Prostate gland (tissue), 2 donors: ENCODE measurements at regions of chrX and their contacts with region 1.

Region 1: DNA sequence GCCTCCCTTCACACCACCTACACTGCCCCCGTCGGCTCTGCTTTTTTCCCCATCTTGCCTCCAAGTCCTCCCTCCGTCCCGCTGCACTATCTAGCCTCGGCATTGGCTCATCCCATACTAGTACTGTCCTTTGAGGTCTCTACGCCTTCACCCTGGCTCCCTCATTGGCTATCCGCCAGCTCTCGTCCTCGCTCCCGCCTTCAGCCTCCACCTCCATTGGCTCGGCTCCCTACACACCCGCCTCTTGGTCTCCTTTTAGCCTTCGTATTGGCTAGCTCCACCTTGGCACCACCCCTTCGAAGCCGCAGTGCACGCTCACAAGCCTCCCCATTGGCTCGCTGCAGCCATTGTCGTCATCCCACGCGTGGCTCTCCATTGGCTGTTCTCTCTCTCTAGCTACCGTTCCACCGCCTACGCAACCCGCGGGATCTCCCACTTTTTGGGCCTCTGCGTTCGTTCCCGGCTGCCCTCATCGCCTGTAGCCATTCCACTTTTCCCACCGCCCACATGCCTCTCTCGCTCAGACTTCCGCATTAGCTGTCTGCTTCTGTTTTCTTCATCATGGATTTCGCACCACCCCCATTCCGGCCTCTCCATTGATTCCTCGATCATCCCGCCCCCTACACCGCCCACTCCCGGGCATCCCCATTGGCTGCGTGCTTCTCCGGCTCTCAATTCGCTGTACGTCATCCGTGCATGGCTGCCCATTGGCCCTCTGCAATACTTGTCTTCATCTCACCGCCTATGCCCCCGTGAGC is 404 bp upstream of the PPP1R3F start:
- DNase-seq: peak; percentile 95
- H3K4me3 ChIP-seq: peak overlapping the region; percentile 54 to 57
- H3K27ac ChIP-seq: peak overlapping the region; percentile 89 to 92
- H3K4me1 ChIP-seq: no peaks in the 10 kb centered on the region
- H3K27me3 ChIP-seq: no peaks in the 10 kb centered on the region
- CTCF ChIP-seq: peak in 1 of 4 experiments; percentile 7
- POLR2A ChIP-seq: peak; percentile 45

Region 2: DNA sequence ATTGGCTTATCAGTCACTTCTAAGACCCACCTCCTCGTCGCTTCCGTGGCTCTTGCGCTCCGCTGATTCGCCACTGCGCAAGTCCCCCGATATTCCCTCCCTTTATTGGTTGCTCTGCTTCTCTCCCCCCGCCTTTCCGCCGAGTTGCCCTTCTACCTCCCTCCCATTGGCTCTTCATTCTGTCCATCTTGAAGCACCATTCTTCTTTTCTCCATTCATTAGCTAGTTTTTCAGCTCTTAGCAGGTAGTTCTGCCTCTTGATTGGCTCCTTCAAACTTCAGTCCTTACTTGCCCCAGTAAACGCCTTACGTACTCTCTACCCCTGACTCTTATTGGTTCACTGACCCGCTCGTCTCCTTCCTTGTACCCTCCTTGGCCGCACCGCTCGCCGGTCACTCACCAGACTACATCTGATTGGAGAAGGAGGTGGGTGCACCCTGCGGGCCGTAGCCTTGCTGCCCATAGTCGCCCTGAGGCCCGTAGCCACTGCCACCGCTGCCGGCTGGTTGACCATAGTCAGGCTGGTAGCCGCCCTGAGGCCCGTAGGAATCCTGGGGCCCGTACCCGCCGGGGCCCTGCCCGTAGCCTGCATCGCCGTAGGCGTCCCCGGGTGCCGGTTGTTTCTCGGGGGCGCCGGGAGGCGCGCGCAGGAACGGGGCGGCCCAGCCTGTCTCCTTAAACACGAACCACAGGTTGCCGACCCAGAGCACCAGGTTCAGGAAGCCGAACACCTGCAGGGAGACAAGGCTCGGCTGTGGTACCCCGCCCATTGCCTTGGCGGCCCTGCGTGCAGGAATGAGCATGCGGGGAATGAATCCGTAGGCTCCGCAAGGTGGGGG is 77.9 kb before region 1 on chrX:
- intact Hi-C with region 1: loop called (anchors 10 kb)
- DNase-seq: peak; percentile 94
- H3K4me3 ChIP-seq: peak overlapping the region; percentile 54 to 56
- H3K27ac ChIP-seq: peak overlapping the region; percentile 77 to 88
- H3K4me1 ChIP-seq: no peaks in the 10 kb centered on the region
- H3K27me3 ChIP-seq: no peaks in the 10 kb centered on the region
- CTCF ChIP-seq: peak in 1 of 4 experiments; percentile 25
- POLR2A ChIP-seq: peak; percentile 80

Region 3: DNA sequence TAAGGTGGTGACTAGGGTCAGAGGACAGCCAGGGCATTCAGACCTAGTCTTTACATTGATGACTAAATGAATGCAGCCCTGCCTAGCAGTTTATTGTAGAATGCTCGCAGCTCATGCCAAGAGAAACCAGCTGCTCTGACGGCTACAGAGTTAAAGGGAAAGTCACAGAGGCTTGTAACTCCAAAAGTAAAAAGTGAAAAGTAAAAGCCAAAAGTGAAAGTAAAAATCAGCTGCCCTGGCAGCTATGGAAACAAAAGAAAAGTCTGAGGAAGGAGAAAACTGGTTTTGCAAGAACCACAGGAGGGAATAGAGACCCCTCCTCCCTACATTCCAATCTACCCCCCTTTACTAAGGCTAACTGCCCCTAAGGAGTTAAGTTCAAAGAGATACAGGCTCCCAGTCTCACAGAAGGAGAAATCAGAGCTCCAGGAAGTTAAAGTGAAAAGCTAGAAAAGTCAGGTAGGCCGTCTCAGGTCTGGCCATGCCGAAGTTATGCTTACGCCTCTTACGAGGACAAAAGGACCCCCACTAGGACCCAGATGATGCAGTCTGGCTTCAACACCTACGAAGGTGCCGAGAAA is 40.3 kb after region 1 on chrX:
- intact Hi-C with region 1: no loop called
- DNase-seq: peak; percentile 5
- H3K4me3 ChIP-seq: peak overlapping the region in 1 of 2 donors; percentile 13
- H3K27ac ChIP-seq: peak overlapping the region; percentile 63 to 78
- H3K4me1 ChIP-seq: no peaks in the 10 kb centered on the region
- H3K27me3 ChIP-seq: no peaks in the 10 kb centered on the region
- CTCF ChIP-seq: no peak
- POLR2A ChIP-seq: no peak